Common myeloid progenitor, CD34-positive (primary cell): ENCODE measurements at regions of chr4 and their contacts with region 1.

Region 1: DNA sequence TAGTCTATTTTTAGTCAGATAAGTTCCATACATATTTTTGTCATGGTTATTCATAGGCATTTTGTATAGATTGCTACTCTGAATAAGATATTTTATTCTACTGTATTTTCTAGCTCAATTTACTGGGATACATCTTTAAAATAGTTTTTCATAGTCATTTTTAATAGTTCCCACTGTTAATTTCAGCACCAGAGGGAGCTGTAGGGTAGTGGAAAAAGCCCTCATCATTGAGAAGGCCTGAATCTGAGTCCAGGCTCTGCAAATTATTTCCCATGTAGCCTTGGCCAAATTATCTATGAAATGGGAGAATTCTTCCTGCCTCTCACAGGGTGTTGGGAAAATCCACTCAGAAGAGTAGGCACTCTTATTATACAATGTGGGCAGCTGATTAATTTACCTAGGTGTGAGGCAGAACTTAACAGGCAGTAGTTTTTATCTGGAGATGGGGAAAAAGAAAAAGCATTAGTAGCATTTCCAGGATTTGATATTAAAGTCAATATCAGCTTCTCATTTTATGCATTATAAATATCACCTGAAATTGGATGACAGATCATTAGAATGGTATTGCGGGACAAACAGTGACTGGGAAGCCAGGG is 102.9 kb upstream of the PAQR3 start:
- DNase-seq: peak; percentile 44 to 68 (median 58)
- H3K4me3 ChIP-seq: no peak overlapping the region
- H3K27ac ChIP-seq: no peak overlapping the region
- H3K4me1 ChIP-seq: peaks cover 0 to 3% (median 0%) of the 10 kb centered on the region in 4 experiments
- H3K27me3 ChIP-seq: no peaks in the 10 kb centered on the region

Region 2: GRCh38 chr4:79059631-79060399 is 17.6 kb after region 1 on chr4:
- CTCF ChIA-PET with region 1: interaction called, 10 read pairs
- POLR2A ChIA-PET with region 1: no interaction called
- DNase-seq: no peak
- H3K4me3 ChIP-seq: no peak overlapping the region
- H3K27ac ChIP-seq: no peak overlapping the region
- H3K4me1 ChIP-seq: no peaks in the 10 kb centered on the region
- H3K27me3 ChIP-seq: no peaks in the 10 kb centered on the region

Region 3: DNA sequence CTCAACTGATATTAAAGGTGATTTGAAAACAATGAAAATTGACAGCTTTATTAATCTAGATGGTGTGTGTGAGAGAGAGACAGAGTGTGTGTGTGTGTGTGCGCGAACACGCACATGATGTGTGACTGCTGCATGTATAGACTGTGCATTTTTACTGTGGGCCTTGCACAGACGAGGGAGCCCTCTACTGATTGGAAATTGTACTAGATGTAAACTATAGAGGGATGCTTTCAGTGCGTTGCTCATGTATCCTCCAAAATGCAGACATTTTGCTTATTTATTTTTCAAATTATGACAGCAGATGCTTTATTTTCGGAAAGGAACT is 534.2 kb after region 1 on chr4:
- CTCF ChIA-PET with region 1: interaction called, 28 read pairs
- POLR2A ChIA-PET with region 1: no interaction called
- DNase-seq: peak; percentile 69 to 82 (median 80)
- H3K4me3 ChIP-seq: no peak overlapping the region
- H3K27ac ChIP-seq: no peak overlapping the region
- H3K4me1 ChIP-seq: peaks cover 0 to 13% (median 10%) of the 10 kb centered on the region in 4 experiments
- H3K27me3 ChIP-seq: no peaks in the 10 kb centered on the region